ENCODE measurements at regions of chr6 and their contacts with region 1.

Region 1: GRCh38 chr6:20564269-20564668 is 30.0 kb downstream of the CDKAL1 start:
- DNase-seq: no peak

Region 2: GRCh38 chr6:21589352-21590345 is 1025.4 kb after region 1 on chr6:
- intact Hi-C with region 1: loop called (anchors 10 kb)
- DNase-seq: peak; percentile 96